ENCODE measurements at regions of chr2 and their contacts with region 1.

Region 1: DNA sequence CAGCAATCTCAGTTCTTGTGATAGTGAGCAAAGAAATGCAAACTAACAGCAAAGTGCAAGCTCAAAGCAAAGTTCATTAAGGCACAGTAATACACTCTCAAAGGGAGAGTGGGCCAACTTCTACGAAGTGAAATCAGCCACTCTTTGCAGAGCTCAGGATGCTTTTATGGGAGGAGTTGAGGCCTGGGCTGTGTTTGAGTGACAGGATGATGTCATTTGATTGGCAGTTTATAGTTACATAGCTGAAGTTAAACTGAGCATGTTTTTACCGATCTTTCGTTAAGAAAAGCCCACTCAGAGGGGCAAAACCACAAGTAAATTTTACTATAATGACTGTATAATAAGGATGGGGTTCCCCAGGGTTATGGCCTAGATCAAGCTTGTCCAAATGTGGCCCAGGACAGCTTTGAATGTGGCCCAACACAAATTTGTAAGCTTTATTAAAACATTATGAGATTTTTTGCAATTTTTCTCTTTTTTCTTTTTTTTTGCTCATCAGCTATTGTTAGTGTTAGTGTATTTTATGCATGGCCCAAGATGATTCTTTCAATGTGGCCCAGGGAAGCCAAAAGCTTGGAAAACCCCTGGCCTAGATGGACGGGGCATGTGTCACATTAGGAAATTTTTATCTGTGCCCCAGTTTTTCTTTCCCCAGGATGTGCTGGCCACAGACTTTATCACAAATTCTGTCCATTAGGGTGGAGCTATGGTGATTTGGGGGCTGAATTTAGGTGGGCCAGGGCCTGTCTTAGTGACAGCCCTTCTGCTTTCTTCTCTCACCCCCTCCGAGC is 8.3 kb upstream of the DNAH7 start:
- DNase-seq: no peak
- H3K4me3 Mint-ChIP-seq: no peak overlapping the region
- H3K27ac Mint-ChIP-seq: no peak overlapping the region
- H3K4me1 Mint-ChIP-seq: peaks cover 13% of the 10 kb centered on the region
- H3K27me3 Mint-ChIP-seq: no peaks in the 10 kb centered on the region

Region 2: DNA sequence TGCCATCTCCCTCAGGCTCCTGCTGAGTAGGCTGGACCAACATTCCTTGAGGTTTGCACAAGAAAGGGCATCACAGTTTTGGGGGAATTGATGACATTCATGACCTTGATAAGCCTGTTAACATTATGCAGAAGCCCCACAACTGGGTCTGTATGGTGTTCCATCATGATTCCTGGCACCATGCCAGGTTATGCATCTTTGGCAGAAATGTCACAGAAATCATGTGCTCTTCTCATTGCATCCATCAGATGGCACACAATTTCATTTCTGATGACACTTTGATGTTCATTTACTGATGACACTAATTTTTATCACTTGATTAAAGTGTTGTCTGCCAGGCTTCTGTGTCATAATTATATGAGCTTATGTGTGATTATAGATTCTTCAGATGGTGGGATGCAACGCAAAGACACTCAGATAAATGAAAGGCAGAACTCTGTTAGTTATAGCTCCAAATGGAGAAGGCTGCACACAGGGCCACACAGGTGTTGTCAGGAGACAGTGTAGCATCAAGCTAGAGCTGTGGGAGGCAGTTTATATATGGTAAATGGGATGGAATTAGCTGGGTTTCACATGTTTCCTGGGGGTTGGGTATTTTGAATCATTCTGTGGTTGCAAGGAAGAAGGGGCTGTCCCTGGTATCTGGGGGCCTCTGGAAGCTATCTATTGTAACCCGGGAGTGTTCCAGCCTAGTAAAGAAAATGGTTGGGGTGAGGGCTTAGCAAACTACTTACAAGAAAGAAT is 228.6 kb before region 1 on chr2:
- CTCF ChIA-PET with region 1: no interaction called
- DNase-seq: no peak
- H3K4me3 Mint-ChIP-seq: no peak overlapping the region
- H3K27ac Mint-ChIP-seq: no peak overlapping the region
- H3K4me1 Mint-ChIP-seq: no peaks in the 10 kb centered on the region
- H3K27me3 Mint-ChIP-seq: peaks cover 5% of the 10 kb centered on the region

Region 3: GRCh38 chr2:196036442-196036841 is 40.5 kb before region 1 on chr2:
- CTCF ChIA-PET with region 1: no interaction called
- DNase-seq: no peak
- H3K4me3 Mint-ChIP-seq: no peak overlapping the region
- H3K27ac Mint-ChIP-seq: no peak overlapping the region
- H3K4me1 Mint-ChIP-seq: no peaks in the 10 kb centered on the region
- H3K27me3 Mint-ChIP-seq: peaks cover 4% of the 10 kb centered on the region

Region 4: DNA sequence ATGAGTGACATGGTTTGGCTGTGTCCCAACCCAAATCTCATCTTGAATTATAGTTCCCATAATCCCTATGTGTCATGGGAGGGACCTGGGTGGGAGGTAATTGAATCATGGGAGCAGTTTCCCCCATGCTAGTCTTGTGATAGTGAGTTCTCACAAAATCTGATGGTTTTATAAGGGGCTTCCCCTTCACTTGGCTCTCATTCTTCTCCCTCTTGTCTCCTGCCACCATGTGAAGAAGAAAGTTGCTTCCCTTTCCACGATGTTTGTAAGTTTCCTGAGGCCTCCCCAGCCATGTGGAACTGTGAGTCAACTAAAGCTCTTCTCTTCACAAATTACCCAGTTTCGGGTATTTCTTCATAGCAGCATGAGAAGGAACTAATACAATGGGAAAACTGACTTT is 22.3 kb before region 1 on chr2:
- CTCF ChIA-PET with region 1: no interaction called
- DNase-seq: no peak
- H3K4me3 Mint-ChIP-seq: no peak overlapping the region
- H3K27ac Mint-ChIP-seq: no peak overlapping the region
- H3K4me1 Mint-ChIP-seq: no peaks in the 10 kb centered on the region
- H3K27me3 Mint-ChIP-seq: peaks cover 3% of the 10 kb centered on the region

Region 5: GRCh38 chr2:196131384-196131937 is 54.5 kb after region 1 on chr2:
- CTCF ChIA-PET with region 1: interaction called, 14 read pairs
- DNase-seq: peak; percentile 80
- H3K4me3 Mint-ChIP-seq: no peak overlapping the region
- H3K27ac Mint-ChIP-seq: peak overlapping the region; percentile 86
- H3K4me1 Mint-ChIP-seq: peaks cover 33% of the 10 kb centered on the region
- H3K27me3 Mint-ChIP-seq: peaks cover 7% of the 10 kb centered on the region

Region 6: GRCh38 chr2:196220671-196221070 is 143.7 kb after region 1 on chr2:
- CTCF ChIA-PET with region 1: interaction called, 13 read pairs
- DNase-seq: no peak
- H3K4me3 Mint-ChIP-seq: no peak overlapping the region
- H3K27ac Mint-ChIP-seq: no peak overlapping the region
- H3K4me1 Mint-ChIP-seq: peaks cover 51% of the 10 kb centered on the region
- H3K27me3 Mint-ChIP-seq: no peaks in the 10 kb centered on the region

Region 7: DNA sequence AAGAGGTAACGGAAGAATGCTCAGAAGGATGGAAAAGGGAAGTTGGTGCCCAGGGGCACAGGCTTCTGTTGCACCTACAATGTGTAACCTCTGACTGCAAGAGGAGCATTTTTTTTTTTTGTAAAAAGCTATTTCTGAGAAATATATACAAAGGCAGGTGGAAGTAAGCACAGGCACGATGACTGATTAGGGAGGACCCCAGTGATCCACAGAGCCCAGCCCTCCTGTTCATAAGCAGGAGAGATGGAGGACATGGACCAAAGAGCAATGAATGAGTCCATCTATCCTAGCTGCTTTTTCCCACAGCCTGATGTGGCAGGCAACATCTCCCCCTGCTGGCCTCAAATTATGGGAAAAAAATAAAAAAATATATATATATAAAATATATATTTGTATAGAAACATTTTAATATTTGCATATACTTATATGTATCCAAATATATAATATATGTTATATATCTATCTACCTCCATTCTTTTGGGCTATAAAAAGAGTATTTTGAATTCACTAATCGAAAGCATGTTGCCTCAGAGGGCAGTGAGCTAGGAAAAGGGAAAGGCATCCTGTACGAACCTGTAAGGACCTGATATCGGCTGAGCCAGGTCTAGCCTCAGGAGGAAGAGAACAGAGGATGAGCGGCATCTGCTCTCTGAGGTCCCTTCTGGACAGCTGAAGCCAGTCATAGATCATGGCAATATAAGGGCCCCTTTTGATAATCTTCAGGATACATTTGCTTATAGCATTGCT is 260.4 kb after region 1 on chr2:
- CTCF ChIA-PET with region 1: interaction called, 145 read pairs
- DNase-seq: peak; percentile 35
- H3K4me3 Mint-ChIP-seq: no peak overlapping the region
- H3K27ac Mint-ChIP-seq: no peak overlapping the region
- H3K4me1 Mint-ChIP-seq: no peaks in the 10 kb centered on the region
- H3K27me3 Mint-ChIP-seq: peaks cover 14% of the 10 kb centered on the region

Region 8: DNA sequence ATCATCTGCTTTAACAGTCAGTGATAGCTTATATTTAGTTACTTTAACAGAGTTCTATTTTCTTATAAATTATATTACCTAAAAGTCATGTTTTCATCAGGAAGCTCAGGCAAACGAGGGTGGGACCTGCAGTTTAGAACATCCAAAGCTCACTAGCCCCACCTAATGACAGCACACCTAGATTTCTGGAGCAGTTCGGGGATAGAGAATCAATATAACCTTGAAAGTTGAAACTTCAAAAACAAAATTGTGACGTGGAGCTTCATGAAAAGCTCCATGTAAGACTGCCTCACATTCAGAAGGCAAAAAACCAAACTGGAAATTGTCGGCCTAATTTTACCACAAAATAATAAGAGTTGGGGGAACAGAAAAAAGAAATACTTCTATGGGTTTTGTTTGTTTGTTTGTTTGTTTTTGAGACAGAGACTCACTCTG is 376.7 kb after region 1 on chr2:
- CTCF ChIA-PET with region 1: interaction called, 48 read pairs
- DNase-seq: peak; percentile 43
- H3K4me3 Mint-ChIP-seq: no peak overlapping the region
- H3K27ac Mint-ChIP-seq: no peak overlapping the region
- H3K4me1 Mint-ChIP-seq: peaks cover 2% of the 10 kb centered on the region
- H3K27me3 Mint-ChIP-seq: peaks cover 4% of the 10 kb centered on the region

Measured in activated naive CD4-positive, alpha-beta T cell treated with anti-CD3 and anti-CD28 coated beads, Interleukin-2, amount 10 ng/mL, durations not matched to agents 7 days and 5 days (primary cell).